Naive thymus-derived CD4-positive, alpha-beta T cell (primary cell): ENCODE measurements at regions of chrX and their contacts with region 1.

Region 1: DNA sequence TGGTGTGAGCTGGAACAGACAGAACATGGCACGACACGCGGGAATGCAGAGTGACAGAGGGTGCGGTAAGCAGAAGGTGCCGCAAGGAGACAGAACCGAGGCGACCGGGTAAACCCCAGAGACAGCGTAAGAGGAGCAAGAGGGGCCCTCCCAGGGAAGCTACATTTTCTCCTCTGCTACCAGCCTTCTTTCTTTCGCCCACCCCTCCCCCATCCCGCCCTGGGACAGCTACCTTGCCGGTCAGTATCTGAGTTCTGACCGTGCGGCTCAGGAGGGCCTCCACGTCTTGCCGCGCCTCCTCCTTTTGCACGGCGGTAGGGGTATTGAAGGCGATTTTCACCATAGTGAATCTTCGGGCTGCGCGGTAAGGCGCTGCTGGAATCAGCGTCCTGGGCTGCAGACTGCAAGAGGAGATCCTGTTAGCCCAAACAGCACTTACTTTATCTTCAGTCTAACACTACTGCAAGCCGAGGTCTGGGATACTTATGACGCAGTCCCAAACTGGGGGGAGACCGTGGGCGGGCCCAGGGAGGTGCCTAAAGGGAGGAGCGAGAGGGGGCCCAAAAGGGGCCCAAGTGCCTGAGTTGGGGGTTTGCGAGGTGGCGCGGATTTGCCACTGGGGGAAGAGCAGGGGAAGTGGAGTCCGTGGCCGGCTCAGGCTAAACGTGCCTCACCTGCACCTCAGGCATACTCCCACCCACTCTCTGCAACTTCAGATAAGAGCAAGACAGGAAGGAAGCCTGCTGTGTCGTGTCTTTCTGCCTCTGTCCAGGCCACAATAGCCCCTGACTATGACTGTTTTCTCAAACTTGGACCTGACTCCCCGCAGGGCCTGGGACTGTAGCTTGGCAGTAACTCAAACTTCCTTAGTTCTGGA is at the start of gene ITM2A:
- DNase-seq: peak; percentile 31 to 75 (median 62)
- ATAC-seq: peak; percentile 86
- H3K4me3 ChIP-seq: peak within 1 kb of the TSS; percentile 93
- H3K4me3 Mint-ChIP-seq: peak within 1 kb of the TSS; percentile 89 to 99 (median 95)
- H3K27ac ChIP-seq: peak within 1 kb of the TSS; percentile 89
- H3K27ac Mint-ChIP-seq: peak within 1 kb of the TSS; percentile 92 to 99 (median 98)
- H3K4me1 ChIP-seq: peaks cover 7 to 13% of the 10 kb centered on the region in 2 donors
- H3K4me1 Mint-ChIP-seq: peaks cover 7 to 39% (median 31%) of the 10 kb centered on the region in 7 donors
- H3K27me3 ChIP-seq: no peaks in the 10 kb centered on the region
- H3K27me3 Mint-ChIP-seq: no peaks in the 10 kb centered on the region
- total RNA-seq, gene ITM2A: 109 to 170 (median 154) TPM

Region 2: GRCh38 chrX:78333521-78333920 is 1033.6 kb before region 1 on chrX:
- CTCF ChIA-PET with region 1: no interaction called
- POLR2A ChIA-PET with region 1: no interaction called
- intact Hi-C with region 1: loop called (anchors 5 kb)
- DNase-seq: peak in 7 of 9 donors; percentile 33 to 77 (median 55)
- ATAC-seq: peak; percentile 88
- H3K4me3 ChIP-seq: no peak overlapping the region
- H3K4me3 Mint-ChIP-seq: peak overlapping the region in 9 of 10 donors; percentile 3 to 70 (median 19)
- H3K27ac ChIP-seq: peak overlapping the region; percentile 75
- H3K27ac Mint-ChIP-seq: peak overlapping the region; percentile 60 to 99 (median 89)
- H3K4me1 ChIP-seq: peaks cover 9 to 38% of the 10 kb centered on the region in 2 donors
- H3K4me1 Mint-ChIP-seq: peaks cover 22 to 86% (median 67%) of the 10 kb centered on the region in 7 donors
- H3K27me3 ChIP-seq: no peaks in the 10 kb centered on the region
- H3K27me3 Mint-ChIP-seq: no peaks in the 10 kb centered on the region

Region 3: DNA sequence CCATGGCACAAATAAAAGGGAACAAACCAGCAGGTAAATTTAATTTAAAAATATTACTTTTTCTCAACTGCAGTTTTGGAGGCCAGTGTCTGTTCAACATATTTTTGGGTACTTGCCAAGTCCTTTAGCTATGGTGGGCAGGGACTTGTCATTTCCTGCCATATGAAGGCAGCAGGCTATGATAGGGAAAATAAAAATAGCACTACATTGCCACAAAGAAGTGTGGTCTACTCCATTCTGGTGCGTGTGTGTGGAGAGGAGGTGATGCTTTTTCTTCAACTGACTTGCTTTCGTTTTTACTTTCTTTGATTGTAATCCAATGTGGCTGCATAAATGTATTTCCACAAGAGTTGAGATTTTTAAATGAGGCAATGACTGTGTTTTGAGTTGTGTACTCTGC is 205.5 kb before region 1 on chrX:
- CTCF ChIA-PET with region 1: no interaction called
- POLR2A ChIA-PET with region 1: interaction called, 5 read pairs
- intact Hi-C with region 1: loop called (anchors 5 kb)
- DNase-seq: peak in 8 of 9 donors; percentile 22 to 85 (median 77)
- ATAC-seq: peak; percentile 95
- H3K4me3 ChIP-seq: peak overlapping the region; percentile 52
- H3K4me3 Mint-ChIP-seq: peak overlapping the region; percentile 80 to 96 (median 90)
- H3K27ac ChIP-seq: peak overlapping the region; percentile 76
- H3K27ac Mint-ChIP-seq: peak overlapping the region; percentile 95 to 99 (median 97)
- H3K4me1 ChIP-seq: peaks cover 48 to 50% of the 10 kb centered on the region in 2 donors
- H3K4me1 Mint-ChIP-seq: peaks cover 16 to 79% (median 68%) of the 10 kb centered on the region in 7 donors
- H3K27me3 ChIP-seq: no peaks in the 10 kb centered on the region
- H3K27me3 Mint-ChIP-seq: no peaks in the 10 kb centered on the region

Region 4: DNA sequence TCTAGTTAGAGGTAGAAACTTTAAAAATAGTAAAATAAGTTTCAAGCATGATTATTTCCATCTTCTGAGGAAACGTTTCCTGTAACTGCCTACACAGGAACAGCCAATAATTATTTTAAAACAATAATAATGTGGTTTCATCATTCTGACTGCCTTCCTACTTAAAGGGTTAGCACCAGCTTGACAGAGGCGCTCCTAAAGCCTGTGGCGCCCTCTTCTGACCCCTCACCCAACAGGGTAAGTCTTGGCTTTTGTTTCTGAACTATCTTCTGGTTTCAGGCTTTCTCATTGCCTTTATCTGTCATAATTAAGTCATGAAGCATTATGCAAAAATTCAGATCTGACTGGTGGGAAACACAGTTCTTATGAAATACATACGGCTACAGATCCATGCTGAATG is 96.7 kb before region 1 on chrX:
- CTCF ChIA-PET with region 1: no interaction called
- POLR2A ChIA-PET with region 1: interaction called, 6 read pairs
- intact Hi-C with region 1: loop called (anchors 5 kb)
- DNase-seq: peak; percentile 29 to 76 (median 68)
- ATAC-seq: peak; percentile 98
- H3K4me3 ChIP-seq: no peak overlapping the region
- H3K4me3 Mint-ChIP-seq: peak overlapping the region; percentile 17 to 77 (median 56)
- H3K27ac ChIP-seq: peak overlapping the region; percentile 61
- H3K27ac Mint-ChIP-seq: peak overlapping the region in 8 of 9 donors; percentile 84 to 94 (median 90)
- H3K4me1 ChIP-seq: peaks cover 24 to 34% of the 10 kb centered on the region in 2 donors
- H3K4me1 Mint-ChIP-seq: peaks cover 13 to 68% (median 45%) of the 10 kb centered on the region in 7 donors
- H3K27me3 ChIP-seq: no peaks in the 10 kb centered on the region
- H3K27me3 Mint-ChIP-seq: no peaks in the 10 kb centered on the region

Region 5: DNA sequence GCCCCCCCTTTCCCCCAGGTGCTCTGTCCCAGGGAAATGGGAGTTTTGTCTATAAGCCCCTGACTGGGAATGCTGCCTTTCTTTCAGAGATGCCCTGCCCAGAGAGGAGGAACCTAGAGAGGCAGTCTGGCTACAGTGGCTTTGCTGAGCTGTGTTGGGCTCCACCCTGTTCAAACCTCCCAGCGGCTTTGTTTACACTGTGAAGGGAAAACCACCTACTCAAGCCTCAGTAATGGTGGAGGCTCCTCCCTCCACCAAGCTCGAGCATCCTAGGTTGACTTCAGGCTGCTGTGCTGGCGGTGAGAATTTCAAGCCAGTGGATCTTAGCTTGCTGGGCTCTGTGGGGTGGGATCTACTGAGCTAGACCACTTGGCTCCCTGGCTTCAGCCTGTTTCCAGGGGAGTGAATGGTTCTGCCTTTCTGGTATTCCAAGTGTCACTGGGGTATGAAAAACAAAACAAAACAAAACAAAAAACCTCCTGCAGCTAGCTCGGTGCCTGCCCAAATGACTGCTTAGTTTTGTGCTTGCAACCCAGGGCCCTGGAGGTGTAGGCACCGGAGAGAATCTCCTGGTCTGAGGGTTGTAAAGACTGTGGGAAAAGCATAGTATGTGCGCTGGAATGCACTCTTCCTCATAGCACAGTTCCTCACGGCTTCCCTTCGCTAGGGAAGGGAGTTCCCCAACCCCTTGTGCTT is 41.7 kb before region 1 on chrX:
- CTCF ChIA-PET with region 1: interaction called, 3 read pairs
- POLR2A ChIA-PET with region 1: interaction called, 6 read pairs
- intact Hi-C with region 1: loop called (anchors 1 to 2 kb)
- DNase-seq: peak in 8 of 9 donors; percentile 25 to 69 (median 50)
- ATAC-seq: peak; percentile 86
- H3K4me3 ChIP-seq: no peak overlapping the region
- H3K4me3 Mint-ChIP-seq: peak overlapping the region; percentile 52 to 86 (median 82)
- H3K27ac ChIP-seq: peak overlapping the region; percentile 57
- H3K27ac Mint-ChIP-seq: peak overlapping the region; percentile 78 to 97 (median 89)
- H3K4me1 ChIP-seq: no peaks in the 10 kb centered on the region
- H3K4me1 Mint-ChIP-seq: peaks cover 0 to 29% (median 14%) of the 10 kb centered on the region in 7 donors
- H3K27me3 ChIP-seq: no peaks in the 10 kb centered on the region
- H3K27me3 Mint-ChIP-seq: no peaks in the 10 kb centered on the region

Region 6: GRCh38 chrX:80799584-80799983 is 1432.5 kb after region 1 on chrX:
- CTCF ChIA-PET with region 1: no interaction called
- POLR2A ChIA-PET with region 1: no interaction called
- intact Hi-C with region 1: no loop called
- DNase-seq: no peak
- ATAC-seq: no peak
- H3K4me3 ChIP-seq: no peak overlapping the region
- H3K4me3 Mint-ChIP-seq: no peak overlapping the region
- H3K27ac ChIP-seq: no peak overlapping the region
- H3K27ac Mint-ChIP-seq: peak overlapping the region in 1 of 9 donors; percentile 12
- H3K4me1 ChIP-seq: no peaks in the 10 kb centered on the region
- H3K4me1 Mint-ChIP-seq: peaks cover 4 to 20% (median 17%) of the 10 kb centered on the region in 7 donors
- H3K27me3 ChIP-seq: no peaks in the 10 kb centered on the region
- H3K27me3 Mint-ChIP-seq: no peaks in the 10 kb centered on the region